GM12878 (cell line): ENCODE measurements at regions of chr1 and their contacts with region 1.

Region 1: DNA sequence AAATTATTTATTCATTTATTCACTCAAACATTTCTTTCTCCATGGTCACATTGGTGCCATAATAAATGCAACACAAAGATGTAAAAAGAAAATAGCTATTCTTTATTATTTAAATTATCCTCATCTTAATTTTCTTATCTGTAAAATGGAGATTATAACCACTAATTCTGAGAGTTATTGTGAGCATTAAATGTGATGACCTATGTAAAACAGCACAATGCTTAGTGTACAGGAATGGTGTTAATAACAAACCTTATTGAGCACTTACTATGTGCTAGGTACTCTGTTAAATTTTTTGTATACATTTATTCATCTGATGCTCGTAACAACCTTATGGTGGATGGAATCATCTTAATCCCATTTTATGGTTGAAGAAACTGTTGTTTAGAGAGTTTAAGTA is 84.6 kb downstream of the NTMT2 start:
- DNase-seq: no peak
- ATAC-seq: no peak
- H3K4me3 ChIP-seq: no peak overlapping the region
- H3K27ac ChIP-seq: no peak overlapping the region
- H3K4me1 ChIP-seq: no peaks in the 10 kb centered on the region
- H3K27me3 ChIP-seq: no peaks in the 10 kb centered on the region
- CTCF ChIP-seq: no peak
- EP300 ChIP-seq: no peak
- POLR2A ChIP-seq: no peak
- RAD21 ChIP-seq: no peak

Region 2: GRCh38 chr1:170126696-170127095 is 103.6 kb before region 1 on chr1:
- CTCF ChIA-PET with region 1: no interaction called
- POLR2A ChIA-PET with region 1: no interaction called
- RAD21 ChIA-PET with region 1: no interaction called
- SMC1A ChIA-PET with region 1: no interaction called
- in situ Hi-C with region 1: no loop called
- intact Hi-C with region 1: no loop called
- DNase-seq: peak; percentile 72
- ATAC-seq: peak; percentile 100
- H3K4me3 ChIP-seq: no peak overlapping the region
- H3K27ac ChIP-seq: 0 out of 2 replicates have a peak overlapping the region, but pooled peaks have one; percentile 18
- H3K4me1 ChIP-seq: peaks cover 3% of the 10 kb centered on the region; the same call in 1 of the 2 replicates
- H3K27me3 ChIP-seq: no peaks in the 10 kb centered on the region
- CTCF ChIP-seq: peak; percentile 19 to 32 (median 30); a peak in 3 of 6 replicates
- EP300 ChIP-seq: no peak; a peak in 1 of 4 replicates
- POLR2A ChIP-seq: no peak
- RAD21 ChIP-seq: peak; percentile 40

Region 3: DNA sequence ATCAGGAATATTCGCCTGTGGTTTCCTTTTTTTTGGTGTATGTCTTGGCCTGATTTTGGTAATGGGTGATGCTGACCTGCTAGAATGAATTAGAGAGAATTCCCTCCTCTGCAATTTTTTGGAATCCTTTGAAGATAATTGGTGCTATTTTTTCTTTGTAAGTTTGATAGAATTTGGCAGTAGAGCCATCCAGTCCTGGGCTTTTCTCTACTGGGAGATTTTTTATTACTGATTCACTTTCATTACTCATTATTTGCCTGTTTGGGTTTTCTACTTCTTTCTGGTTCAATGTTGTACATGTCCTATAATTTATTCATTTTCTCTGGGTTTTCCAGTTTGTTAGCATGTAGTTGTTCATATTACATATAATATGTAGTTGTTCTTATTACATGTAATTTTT is 35.9 kb before region 1 on chr1:
- CTCF ChIA-PET with region 1: no interaction called
- POLR2A ChIA-PET with region 1: no interaction called
- RAD21 ChIA-PET with region 1: no interaction called
- SMC1A ChIA-PET with region 1: no interaction called
- in situ Hi-C with region 1: no loop called
- intact Hi-C with region 1: no loop called
- DNase-seq: no peak
- ATAC-seq: no peak
- H3K4me3 ChIP-seq: no peak overlapping the region
- H3K27ac ChIP-seq: no peak overlapping the region
- H3K4me1 ChIP-seq: no peaks in the 10 kb centered on the region
- H3K27me3 ChIP-seq: no peaks in the 10 kb centered on the region
- CTCF ChIP-seq: no peak
- EP300 ChIP-seq: no peak
- POLR2A ChIP-seq: no peak
- RAD21 ChIP-seq: no peak

Region 4: GRCh38 chr1:170240409-170240808 is 10.1 kb after region 1 on chr1:
- CTCF ChIA-PET with region 1: interaction called, 4 read pairs
- POLR2A ChIA-PET with region 1: no interaction called
- RAD21 ChIA-PET with region 1: no interaction called
- SMC1A ChIA-PET with region 1: interaction called, 10 read pairs
- in situ Hi-C with region 1: no loop called
- intact Hi-C with region 1: no loop called
- DNase-seq: peak; percentile 32
- ATAC-seq: peak; percentile 94
- H3K4me3 ChIP-seq: no peak overlapping the region
- H3K27ac ChIP-seq: no peak overlapping the region
- H3K4me1 ChIP-seq: peaks cover 10% of the 10 kb centered on the region; the same call in 1 of the 2 replicates
- H3K27me3 ChIP-seq: no peaks in the 10 kb centered on the region
- CTCF ChIP-seq: no peak
- EP300 ChIP-seq: peak; percentile 9 to 39; a peak in 2 of 4 replicates
- POLR2A ChIP-seq: no peak
- RAD21 ChIP-seq: no peak